GM23248 (cell line): ENCODE measurements at regions of chr2 and their contacts with region 1.

Region 1: DNA sequence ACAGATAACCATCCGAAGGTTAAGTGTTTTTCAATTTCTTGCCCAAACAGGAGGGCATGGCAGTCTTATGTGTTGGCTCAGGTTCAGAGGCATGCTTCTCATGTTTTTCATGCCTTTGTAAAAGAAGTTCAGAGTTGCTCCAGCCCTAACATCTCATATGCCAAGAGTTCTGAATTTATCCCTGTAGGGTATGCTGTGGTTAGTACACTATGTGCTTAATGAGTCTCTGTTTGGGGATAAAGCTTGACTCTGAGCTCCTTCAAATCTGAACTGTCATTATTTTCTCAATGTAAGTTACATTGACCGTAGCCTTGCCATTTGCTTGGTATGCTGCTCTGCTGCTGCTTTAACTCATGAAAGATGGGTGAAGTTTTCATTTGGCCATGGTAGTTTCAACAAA is 67.9 kb upstream of the PNPT1 start:
- DNase-seq: peak; percentile 55
- H3K4me3 ChIP-seq: no peak overlapping the region
- H3K27ac ChIP-seq: peak overlapping the region; percentile 38
- H3K4me1 ChIP-seq: peaks cover 18% of the 10 kb centered on the region
- H3K27me3 ChIP-seq: no peaks in the 10 kb centered on the region

Region 2: DNA sequence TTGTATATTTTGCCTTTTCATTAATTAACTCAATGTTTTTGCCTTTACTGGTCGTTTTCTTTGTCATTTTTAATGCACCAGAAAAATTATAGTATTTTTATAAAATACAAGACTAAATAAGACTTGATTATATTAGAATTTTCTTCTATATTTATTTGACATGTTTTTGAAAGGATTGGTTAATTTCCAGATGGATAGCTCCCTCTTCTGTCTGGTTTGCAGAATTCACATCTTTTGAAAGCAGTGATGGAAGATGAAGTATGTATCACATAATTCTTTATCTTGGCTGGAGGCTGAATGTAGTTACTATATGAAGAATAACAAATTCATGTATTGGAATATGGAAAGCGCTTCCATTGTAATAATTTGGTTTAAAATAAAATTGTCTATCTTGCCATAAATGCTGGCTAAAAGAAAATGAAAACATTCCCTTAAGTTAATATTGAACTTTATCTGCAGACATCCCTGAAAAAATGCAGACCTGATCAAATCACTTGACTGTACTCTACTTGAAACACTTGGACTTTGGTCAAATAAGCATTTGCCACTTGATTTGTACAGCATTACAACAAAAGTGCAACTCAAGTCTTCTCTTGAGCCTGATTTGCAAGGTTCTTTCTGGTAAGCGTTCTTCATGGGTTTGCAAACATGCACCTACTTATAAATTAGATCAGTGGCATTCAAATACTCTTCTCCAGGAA is 248.4 kb after region 1 on chr2:
- in situ Hi-C with region 1: loop called (anchors 10 kb)
- DNase-seq: peak; percentile 75
- H3K4me3 ChIP-seq: peak overlapping the region; percentile 35
- H3K27ac ChIP-seq: peak overlapping the region; percentile 84
- H3K4me1 ChIP-seq: peaks cover 17% of the 10 kb centered on the region
- H3K27me3 ChIP-seq: no peaks in the 10 kb centered on the region